Panc1 (cell line): ENCODE measurements at regions of chr7 and their contacts with region 1.

Region 1: GRCh38 chr7:41977151-41977651 is 259.8 kb downstream of the GLI3 start:
- DNase-seq: peak; percentile 41
- ATAC-seq: peak; percentile 61; the same call in 1 of the 2 replicates
- H3K4me3 ChIP-seq: no peak overlapping the region
- H3K27ac ChIP-seq: no peak overlapping the region
- H3K4me1 ChIP-seq: 0 out of 2 replicates have a peak, but pooled peaks cover 3% of the 10 kb centered on the region
- H3K27me3 ChIP-seq: no peaks in the 10 kb centered on the region
- CTCF ChIP-seq: peak; percentile 87

Region 2: DNA sequence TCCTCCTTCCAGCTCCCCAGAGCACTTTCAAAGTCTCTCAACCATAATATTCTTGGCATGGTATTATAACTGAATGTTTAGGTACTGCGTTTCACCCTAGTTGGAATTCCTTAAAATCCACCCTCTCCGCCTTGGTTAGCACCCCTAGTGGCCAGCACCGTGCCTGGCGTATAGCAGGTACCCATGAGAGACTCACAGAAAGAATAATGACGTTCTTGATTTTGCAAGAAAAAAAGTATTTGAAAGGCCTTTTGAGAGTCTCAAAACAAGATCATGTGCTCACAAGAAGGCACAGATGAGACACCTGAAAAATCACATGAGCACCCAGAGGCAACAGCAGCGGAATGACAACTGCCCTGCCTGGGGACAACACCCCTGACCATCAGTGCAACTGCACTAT is 209.0 kb after region 1 on chr7:
- CTCF ChIA-PET with region 1: no interaction called
- POLR2A ChIA-PET with region 1: no interaction called
- in situ Hi-C with region 1: no loop called
- intact Hi-C with region 1: loop called (anchors 5 kb)
- DNase-seq: no peak
- ATAC-seq: peak; percentile 78
- H3K4me3 ChIP-seq: no peak overlapping the region
- H3K27ac ChIP-seq: no peak overlapping the region
- H3K4me1 ChIP-seq: no peaks in the 10 kb centered on the region
- H3K27me3 ChIP-seq: no peaks in the 10 kb centered on the region
- CTCF ChIP-seq: peak; percentile 84

Region 3: DNA sequence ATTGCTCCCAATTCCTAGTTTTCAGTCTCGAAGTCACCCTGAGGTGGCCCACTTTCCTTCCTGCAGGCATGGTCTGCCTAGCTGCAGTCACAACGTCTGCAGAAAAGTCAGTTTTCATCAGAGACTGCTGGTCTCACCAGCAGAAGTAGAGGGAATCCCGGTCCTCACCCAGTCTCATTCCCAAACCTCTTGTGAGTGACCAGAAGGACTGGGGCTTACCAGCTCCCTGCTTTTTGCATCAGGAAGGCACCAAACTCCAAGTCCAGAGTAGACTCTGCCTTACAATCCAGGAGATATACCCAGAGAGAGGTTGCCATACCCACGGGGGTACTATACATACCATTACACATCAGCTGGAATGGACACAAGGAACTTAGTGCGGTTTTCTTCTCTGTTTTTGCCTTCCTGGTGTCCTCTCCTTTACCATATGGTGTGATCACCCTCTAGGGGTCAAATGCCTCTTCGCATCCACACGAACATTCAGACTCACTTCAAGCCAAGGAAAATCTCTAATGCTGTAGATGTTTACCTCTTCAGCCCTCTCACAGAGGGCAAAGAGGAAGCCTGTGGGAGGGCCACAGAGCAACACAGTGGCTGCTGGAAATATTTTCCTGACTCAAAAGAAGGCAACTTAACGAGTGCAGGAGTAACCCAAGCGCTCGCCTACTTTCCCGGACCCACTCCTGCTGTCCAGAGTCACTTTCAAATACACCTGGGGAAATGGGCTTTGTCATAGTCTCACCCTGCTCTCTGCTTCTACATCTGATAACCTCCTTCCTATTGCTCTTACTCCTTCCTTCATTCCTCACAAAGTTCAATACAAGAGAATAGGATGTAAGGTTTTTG is 713.8 kb after region 1 on chr7:
- CTCF ChIA-PET with region 1: interaction called, 4 read pairs
- POLR2A ChIA-PET with region 1: no interaction called
- in situ Hi-C with region 1: no loop called
- intact Hi-C with region 1: loop called (anchors 10 kb)
- DNase-seq: no peak
- ATAC-seq: peak; percentile 86
- H3K4me3 ChIP-seq: no peak overlapping the region
- H3K27ac ChIP-seq: no peak overlapping the region
- H3K4me1 ChIP-seq: no peaks in the 10 kb centered on the region
- H3K27me3 ChIP-seq: no peaks in the 10 kb centered on the region
- CTCF ChIP-seq: peak; percentile 69

Region 4: GRCh38 chr7:42843205-42843800 is 866.1 kb after region 1 on chr7:
- CTCF ChIA-PET with region 1: interaction called, 4 read pairs
- POLR2A ChIA-PET with region 1: no interaction called
- in situ Hi-C with region 1: no loop called
- intact Hi-C with region 1: loop called (anchors 10 kb)
- DNase-seq: no peak
- ATAC-seq: peak; percentile 98
- H3K4me3 ChIP-seq: no peak overlapping the region
- H3K27ac ChIP-seq: no peak overlapping the region
- H3K4me1 ChIP-seq: no peaks in the 10 kb centered on the region
- H3K27me3 ChIP-seq: peaks cover 13% of the 10 kb centered on the region
- CTCF ChIP-seq: peak; percentile 87

Region 5: GRCh38 chr7:43362652-43363034 is 1385.4 kb after region 1 on chr7:
- CTCF ChIA-PET with region 1: no interaction called
- POLR2A ChIA-PET with region 1: interaction called, 12 read pairs
- in situ Hi-C with region 1: no loop called
- intact Hi-C with region 1: no loop called
- DNase-seq: no peak
- ATAC-seq: no peak
- H3K4me3 ChIP-seq: no peak overlapping the region
- H3K27ac ChIP-seq: no peak overlapping the region
- H3K4me1 ChIP-seq: no peaks in the 10 kb centered on the region
- H3K27me3 ChIP-seq: no peaks in the 10 kb centered on the region
- CTCF ChIP-seq: no peak